ENCODE measurements at regions of chr14 and their contacts with region 1.

Region 1: DNA sequence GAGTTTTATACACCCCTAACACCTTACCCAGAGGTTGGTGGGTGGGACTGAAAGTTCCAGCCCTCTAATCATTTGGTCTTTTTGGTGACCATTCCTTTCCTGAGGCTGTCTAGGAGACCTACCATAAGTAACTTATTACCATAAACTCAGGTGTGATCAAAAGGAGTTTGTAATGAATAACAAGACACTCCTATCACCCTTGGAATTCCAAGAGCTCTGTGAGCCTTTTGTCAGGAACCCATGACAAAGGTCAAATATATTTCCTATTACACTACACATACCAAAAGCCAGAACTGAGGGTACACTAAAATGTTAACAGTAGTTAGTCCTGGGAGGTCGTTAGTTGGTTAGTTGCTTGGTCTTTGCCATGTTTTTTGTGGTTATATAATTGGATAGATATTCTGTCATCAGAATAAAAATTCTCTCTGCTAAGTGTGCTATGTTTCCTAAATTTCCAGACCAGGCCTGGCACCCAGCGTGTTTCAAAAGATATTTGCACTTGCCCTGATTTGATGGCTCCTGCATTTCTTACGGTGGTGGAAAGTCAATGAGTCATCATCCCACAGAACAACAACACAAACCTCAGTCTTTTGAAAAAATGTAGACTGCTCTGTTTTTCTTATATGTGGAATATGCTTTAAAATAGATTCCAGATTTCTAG is 27.0 kb upstream of the AKAP5 start:
- DNase-seq: peak; percentile 90
- H3K4me3 ChIP-seq: no peak overlapping the region
- CTCF ChIP-seq: no peak

Region 2: GRCh38 chr14:62505045-62505444 is 1933.3 kb before region 1 on chr14:
- CTCF ChIA-PET with region 1: no interaction called
- POLR2A ChIA-PET with region 1: no interaction called
- DNase-seq: no peak
- H3K4me3 ChIP-seq: no peak overlapping the region
- CTCF ChIP-seq: no peak

Region 3: DNA sequence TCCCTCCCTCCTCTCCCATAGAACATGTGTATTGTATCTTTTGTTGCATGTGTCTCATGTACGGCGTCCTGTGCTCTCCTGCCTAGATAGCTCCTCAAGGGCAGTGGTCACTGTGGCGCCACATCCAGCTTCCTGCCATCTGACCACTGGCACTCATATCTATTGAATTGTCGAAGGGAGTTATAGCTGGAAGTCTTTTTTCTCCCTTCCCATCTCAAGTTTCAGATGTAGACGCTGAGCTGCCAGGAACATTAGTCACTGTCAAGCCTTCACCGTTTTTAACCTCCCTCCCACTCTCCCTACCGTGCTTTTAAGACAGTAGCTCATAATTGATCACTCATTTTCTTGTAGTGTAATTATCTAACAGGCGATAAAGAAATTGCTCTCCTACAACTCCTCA is 17.1 kb before region 1 on chr14:
- CTCF ChIA-PET with region 1: interaction called, 50 read pairs
- POLR2A ChIA-PET with region 1: no interaction called
- DNase-seq: no peak
- H3K4me3 ChIP-seq: no peak overlapping the region
- CTCF ChIP-seq: no peak